Dendritic cell treated with granulocyte-macrophage colony-stimulating factor and Interleukin-4, amounts not matched to agents 40 ng/mL and 50 ng/mL, for 4 days (primary cell): ENCODE measurements at regions of chr15 and their contacts with region 1.

Region 1: GRCh38 chr15:92077353-92078085 is 224.0 kb downstream of the SLCO3A1 start:
- H3K4me3 Mint-ChIP-seq: no peak overlapping the region
- H3K27ac Mint-ChIP-seq: peak overlapping the region; percentile 32
- H3K4me1 Mint-ChIP-seq: peaks cover 81% of the 10 kb centered on the region
- H3K27me3 Mint-ChIP-seq: no peaks in the 10 kb centered on the region

Region 2: GRCh38 chr15:91706322-91707032 is 371.0 kb before region 1 on chr15:
- intact Hi-C with region 1: loop called (anchors 10 kb)
- H3K4me3 Mint-ChIP-seq: peak overlapping the region; percentile 72
- H3K27ac Mint-ChIP-seq: peak overlapping the region; percentile 91
- H3K4me1 Mint-ChIP-seq: peaks cover 45% of the 10 kb centered on the region
- H3K27me3 Mint-ChIP-seq: peaks cover 13% of the 10 kb centered on the region

Region 3: DNA sequence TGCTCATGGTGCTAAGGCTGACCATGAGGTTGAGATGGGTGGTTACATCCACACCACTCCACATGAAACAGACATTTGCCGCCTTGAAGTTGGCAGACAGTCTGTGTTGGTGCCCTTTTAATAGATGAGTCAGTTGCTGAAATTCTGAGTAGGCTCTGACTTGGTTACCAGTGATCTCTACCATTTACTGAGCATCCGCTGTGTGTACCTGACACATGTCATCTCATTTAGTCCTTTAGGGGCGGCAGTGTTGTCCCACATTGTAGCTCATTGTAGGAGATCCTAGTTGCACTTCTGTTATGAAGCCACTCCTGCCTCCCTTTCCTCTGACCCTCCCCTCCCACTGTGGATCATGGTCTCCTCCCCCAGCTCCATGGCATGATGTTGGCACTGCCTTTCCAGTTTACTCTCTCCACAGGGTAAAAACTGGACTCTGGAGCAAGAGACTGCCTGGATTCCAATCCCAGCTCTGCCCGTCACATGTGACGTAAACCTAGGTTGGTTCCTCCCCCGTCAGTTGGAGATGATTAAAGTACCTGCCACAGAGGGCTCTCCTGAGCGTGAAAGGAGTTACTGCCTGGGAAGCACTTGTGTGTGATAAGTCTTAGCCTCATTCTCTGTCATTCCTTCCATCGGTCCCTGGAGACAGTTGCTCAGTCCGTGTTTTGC is 202.4 kb before region 1 on chr15:
- intact Hi-C with region 1: loop called (anchors 5 kb)
- H3K4me3 Mint-ChIP-seq: no peak overlapping the region
- H3K27ac Mint-ChIP-seq: peak overlapping the region; percentile 68
- H3K4me1 Mint-ChIP-seq: peaks cover 78% of the 10 kb centered on the region
- H3K27me3 Mint-ChIP-seq: no peaks in the 10 kb centered on the region

Region 4: DNA sequence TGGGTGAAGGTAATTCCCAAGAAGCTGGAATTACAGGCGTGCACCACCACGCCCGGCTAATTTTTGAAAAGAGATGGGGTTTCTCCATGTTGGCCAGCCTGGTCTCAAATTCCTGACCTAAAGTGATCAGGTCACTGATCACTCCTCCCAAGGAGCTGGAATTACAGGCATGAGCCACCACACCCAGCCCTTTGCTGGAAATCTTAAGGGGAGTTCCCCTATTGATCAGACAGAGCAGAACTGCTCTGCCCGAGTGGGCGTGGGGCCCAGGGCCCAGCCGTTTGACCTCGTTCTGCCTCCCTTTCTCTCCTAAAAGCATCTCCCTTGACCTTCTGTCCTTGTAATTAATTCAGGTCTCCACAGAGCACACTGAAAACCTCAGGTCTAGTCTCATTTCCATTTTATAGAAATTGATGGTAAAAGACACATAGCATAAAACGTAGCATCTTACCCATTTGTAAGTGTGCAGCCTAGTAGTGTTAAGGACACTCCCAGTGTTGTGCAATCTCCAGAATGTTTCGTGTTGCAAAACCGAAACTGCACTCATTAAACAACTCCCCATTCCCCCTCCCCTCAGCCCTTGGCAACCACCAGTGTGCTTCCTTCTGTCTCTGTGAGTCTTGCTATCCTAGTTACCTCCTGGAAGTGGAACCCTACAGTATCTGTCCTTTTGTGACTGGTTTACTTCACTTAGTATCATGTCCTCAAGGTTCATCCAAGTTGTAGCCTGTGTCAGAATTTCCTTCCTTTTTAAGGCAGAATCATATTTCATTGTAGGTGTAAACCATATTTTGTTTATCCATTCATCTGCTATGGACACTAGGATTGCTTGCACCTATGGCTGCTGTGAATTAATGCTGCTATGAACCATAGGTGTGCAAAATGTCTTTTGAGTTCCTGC is 134.6 kb before region 1 on chr15:
- intact Hi-C with region 1: loop called (anchors 10 kb)
- H3K4me3 Mint-ChIP-seq: peak overlapping the region; percentile 69
- H3K27ac Mint-ChIP-seq: peak overlapping the region; percentile 92
- H3K4me1 Mint-ChIP-seq: peaks cover 97% of the 10 kb centered on the region
- H3K27me3 Mint-ChIP-seq: no peaks in the 10 kb centered on the region

Region 5: DNA sequence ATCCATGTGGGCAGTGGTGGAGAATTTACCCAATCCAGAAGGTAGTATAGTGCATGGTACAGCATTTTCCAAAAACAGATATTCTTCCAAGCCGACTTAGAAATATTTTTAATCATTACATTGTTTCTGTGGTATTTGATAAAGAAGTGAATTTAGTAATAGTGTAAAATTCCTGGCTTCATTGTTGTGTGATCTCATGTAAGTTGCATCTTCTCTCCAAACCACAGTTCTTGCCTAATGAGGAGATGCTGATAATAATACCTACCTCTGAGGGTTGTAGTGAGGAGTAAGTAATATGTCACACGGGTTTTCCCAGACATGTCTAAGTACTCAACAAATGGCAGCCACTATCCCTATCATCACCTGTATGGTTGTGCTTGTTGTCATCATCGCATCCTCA is 56.8 kb before region 1 on chr15:
- intact Hi-C with region 1: no loop called
- H3K4me3 Mint-ChIP-seq: no peak overlapping the region
- H3K27ac Mint-ChIP-seq: no peak overlapping the region
- H3K4me1 Mint-ChIP-seq: peaks cover 53% of the 10 kb centered on the region
- H3K27me3 Mint-ChIP-seq: no peaks in the 10 kb centered on the region